ENCODE measurements at regions of chr16 and their contacts with region 1.

Region 1: GRCh38 chr16:29763326-29763725 is 14.7 kb upstream of the ZG16 start:
- DNase-seq: no peak
- ATAC-seq: no peak

Region 2: GRCh38 chr16:29738514-29738913 is 24.8 kb before region 1 on chr16:
- intact Hi-C with region 1: no loop called
- DNase-seq: no peak
- ATAC-seq: no peak

Region 3: DNA sequence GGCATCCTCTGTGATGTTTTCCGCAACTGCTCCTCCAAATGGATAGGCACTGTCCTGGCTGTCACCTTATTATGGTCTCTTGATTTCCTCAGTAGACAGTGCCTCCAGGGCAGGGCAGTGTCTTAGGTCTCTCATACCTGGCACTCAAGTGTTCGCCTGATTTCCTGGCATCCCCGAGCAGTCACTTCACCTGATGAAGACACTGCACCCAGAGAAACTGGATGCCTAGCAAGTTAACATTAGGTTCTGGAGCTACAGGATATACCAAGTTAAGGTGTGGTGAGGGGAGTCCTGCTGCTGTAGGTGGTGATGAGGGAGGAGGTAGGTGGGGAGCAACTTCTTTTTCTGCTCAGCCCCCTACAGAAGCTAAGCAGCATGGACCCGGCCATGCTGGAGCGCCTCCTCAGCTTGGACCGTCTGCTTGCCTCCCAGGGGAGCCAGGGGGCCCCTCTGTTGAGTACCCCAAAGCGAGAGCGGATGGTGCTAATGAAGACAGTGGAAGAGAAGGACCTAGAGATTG is 39.1 kb after region 1 on chr16:
- intact Hi-C with region 1: loop called (anchors 1 kb)
- DNase-seq: no peak
- ATAC-seq: no peak

Region 4: GRCh38 chr16:29852654-29853053 is 89.3 kb after region 1 on chr16:
- intact Hi-C with region 1: no loop called
- DNase-seq: no peak
- ATAC-seq: no peak